ENCODE measurements at regions of chr7 and their contacts with region 1.

Region 1: GRCh38 chr7:31512166-31512565 is 1.7 kb upstream of the ITPRID1 start:
- DNase-seq: no peak
- H3K4me3 ChIP-seq: no peak overlapping the region
- H3K27ac ChIP-seq: no peak overlapping the region
- H3K4me1 ChIP-seq: no peaks in the 10 kb centered on the region
- H3K27me3 ChIP-seq: no peaks in the 10 kb centered on the region
- CTCF ChIP-seq: no peak
- EP300 ChIP-seq: no peak
- POLR2A ChIP-seq: no peak

Region 2: GRCh38 chr7:31539676-31540075 is 27.5 kb after region 1 on chr7:
- intact Hi-C with region 1: loop called in 1 of 4 experiments (anchors 1 kb)
- DNase-seq: no peak
- H3K4me3 ChIP-seq: no peak overlapping the region
- H3K27ac ChIP-seq: no peak overlapping the region
- H3K4me1 ChIP-seq: no peaks in the 10 kb centered on the region
- H3K27me3 ChIP-seq: no peaks in the 10 kb centered on the region
- CTCF ChIP-seq: no peak
- EP300 ChIP-seq: no peak
- POLR2A ChIP-seq: no peak